CD8-positive, alpha-beta T cell (primary cell): ENCODE measurements at regions of chr9 and their contacts with region 1.

Region 1: DNA sequence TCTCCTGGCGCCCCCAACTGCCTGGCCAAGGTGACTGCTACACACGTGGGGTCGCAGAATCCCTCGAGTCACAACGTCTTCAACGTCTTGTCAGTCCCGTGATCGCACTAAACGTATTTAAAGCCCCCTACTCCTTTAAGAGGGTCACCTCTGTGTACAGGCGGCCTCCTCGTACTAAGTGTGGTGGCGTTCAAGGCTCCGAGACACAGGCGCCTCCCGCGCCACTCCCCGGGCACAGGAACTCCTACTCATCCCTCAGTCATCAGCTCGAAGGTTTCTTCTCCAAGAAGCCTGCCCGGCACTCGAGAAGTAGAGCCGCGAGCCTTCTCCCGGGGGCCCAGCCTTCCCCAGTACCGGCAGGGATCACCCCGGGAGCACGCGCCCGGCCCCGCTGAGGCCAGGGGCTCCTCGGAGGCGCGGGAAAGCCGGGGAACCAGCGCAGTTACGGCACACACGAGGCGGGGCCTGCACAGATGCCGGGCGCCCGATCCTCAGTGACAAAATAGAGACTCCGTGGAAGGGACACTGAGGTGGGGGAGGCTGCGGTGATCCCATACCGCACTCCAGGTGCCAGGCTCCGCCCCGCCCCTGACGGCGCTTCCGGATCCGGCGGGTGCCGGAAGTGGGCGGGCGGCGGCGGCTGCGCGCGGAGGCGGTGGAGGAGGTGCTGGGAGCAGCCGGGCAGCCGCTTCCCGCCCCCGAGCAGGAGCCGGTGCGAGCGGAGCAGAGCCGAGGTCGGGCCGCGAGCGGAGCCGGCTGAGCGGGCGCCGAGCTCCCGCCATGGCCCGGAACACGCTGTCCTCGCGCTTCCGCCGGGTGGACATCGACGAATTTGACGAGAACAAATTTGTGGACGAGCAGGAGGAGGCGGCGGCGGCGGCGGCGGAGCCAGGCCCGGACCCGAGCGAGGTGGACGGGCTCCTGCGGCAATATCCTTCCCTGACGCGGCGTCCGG is 6.9 kb downstream of the ARPC5L start:
- DNase-seq: peak; percentile 82 to 94 (median 88)
- ATAC-seq: peak; percentile 66
- H3K4me3 ChIP-seq: peak overlapping the region; percentile 76 to 79
- H3K4me3 Mint-ChIP-seq: peak overlapping the region; percentile 95
- H3K27ac ChIP-seq: peak overlapping the region; percentile 81 to 94
- H3K27ac Mint-ChIP-seq: peak overlapping the region; percentile 97
- H3K4me1 ChIP-seq: peaks cover 42% of the 10 kb centered on the region
- H3K4me1 Mint-ChIP-seq: peaks cover 51% of the 10 kb centered on the region
- H3K27me3 ChIP-seq: no peaks in the 10 kb centered on the region
- H3K27me3 Mint-ChIP-seq: no peaks in the 10 kb centered on the region
- CTCF ChIP-seq: no peak

Region 2: GRCh38 chr9:122975196-122975595 is 1893.6 kb before region 1 on chr9:
- CTCF ChIA-PET with region 1: no interaction called
- POLR2A ChIA-PET with region 1: no interaction called
- intact Hi-C with region 1: no loop called
- DNase-seq: no peak
- ATAC-seq: no peak
- H3K4me3 ChIP-seq: no peak overlapping the region
- H3K4me3 Mint-ChIP-seq: no peak overlapping the region
- H3K27ac ChIP-seq: no peak overlapping the region
- H3K27ac Mint-ChIP-seq: no peak overlapping the region
- H3K4me1 ChIP-seq: no peaks in the 10 kb centered on the region
- H3K4me1 Mint-ChIP-seq: peaks cover 3% of the 10 kb centered on the region
- H3K27me3 ChIP-seq: no peaks in the 10 kb centered on the region
- H3K27me3 Mint-ChIP-seq: no peaks in the 10 kb centered on the region
- CTCF ChIP-seq: no peak

Region 3: DNA sequence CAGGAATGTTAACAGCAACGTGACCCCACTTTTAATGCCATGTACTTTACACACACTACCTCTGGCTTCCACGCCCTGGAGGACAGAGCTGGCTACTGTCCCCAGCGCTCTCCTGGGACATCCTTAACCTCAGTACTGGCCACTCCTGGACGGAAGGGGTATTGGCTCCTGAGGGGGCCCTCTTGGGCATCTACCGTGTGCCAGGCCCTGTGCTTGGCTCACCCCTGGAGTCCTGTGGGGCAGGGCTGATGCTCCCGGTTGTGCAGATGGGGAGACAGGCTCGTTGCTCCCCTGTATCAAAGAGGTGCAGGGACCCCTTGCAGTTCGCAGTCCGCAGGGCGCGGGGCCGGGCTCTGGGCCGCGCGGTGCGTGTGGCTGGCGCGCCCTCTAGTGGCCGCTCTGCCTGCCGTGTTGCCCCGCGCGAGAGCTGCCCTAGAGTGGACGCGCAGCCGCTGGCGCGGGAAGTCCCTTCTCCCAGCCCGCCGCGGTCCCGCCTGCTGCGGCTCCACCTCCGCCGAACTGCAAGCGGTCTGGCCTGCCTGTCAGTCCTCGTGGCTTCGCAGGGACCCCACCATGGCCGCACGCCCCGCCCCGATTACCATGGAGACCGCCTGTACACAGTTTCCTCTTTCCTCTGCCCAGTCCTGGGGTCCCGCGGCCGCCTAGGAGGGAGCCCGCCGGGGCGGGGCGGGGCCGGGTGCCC is 15.8 kb before region 1 on chr9 and contains the start of gene WDR38:
- CTCF ChIA-PET with region 1: interaction called, 40 read pairs
- POLR2A ChIA-PET with region 1: interaction called, 3 read pairs
- intact Hi-C with region 1: loop called in 1 of 2 experiments (anchors 1 kb)
- DNase-seq: peak; percentile 64 to 95 (median 80)
- ATAC-seq: peak; percentile 83
- H3K4me3 ChIP-seq: peak within 1 kb of the TSS; percentile 37 to 44
- H3K4me3 Mint-ChIP-seq: peak within 1 kb of the TSS; percentile 65
- H3K27ac ChIP-seq: peak within 1 kb of the TSS in 1 of 2 experiments; percentile 73
- H3K27ac Mint-ChIP-seq: peak within 1 kb of the TSS; percentile 64
- H3K4me1 ChIP-seq: peaks cover 12% of the 10 kb centered on the region
- H3K4me1 Mint-ChIP-seq: peaks cover 9% of the 10 kb centered on the region
- H3K27me3 ChIP-seq: no peaks in the 10 kb centered on the region
- H3K27me3 Mint-ChIP-seq: peaks cover 9% of the 10 kb centered on the region
- CTCF ChIP-seq: peak; percentile 98
- total RNA-seq, gene WDR38: not detected

Region 4: GRCh38 chr9:124894741-124895170 is 26.0 kb after region 1 on chr9:
- CTCF ChIA-PET with region 1: interaction called, 7 read pairs
- POLR2A ChIA-PET with region 1: interaction called, 4 read pairs
- intact Hi-C with region 1: loop called in 1 of 2 experiments (anchors 2 kb)
- DNase-seq: peak in 8 of 9 experiments; percentile 21 to 83 (median 53)
- ATAC-seq: peak; percentile 97
- H3K4me3 ChIP-seq: no peak overlapping the region
- H3K4me3 Mint-ChIP-seq: no peak overlapping the region
- H3K27ac ChIP-seq: no peak overlapping the region
- H3K27ac Mint-ChIP-seq: peak overlapping the region; percentile 81
- H3K4me1 ChIP-seq: no peaks in the 10 kb centered on the region
- H3K4me1 Mint-ChIP-seq: peaks cover 13% of the 10 kb centered on the region
- H3K27me3 ChIP-seq: peaks cover 0 to 7% of the 10 kb centered on the region in 2 experiments
- H3K27me3 Mint-ChIP-seq: peaks cover 13% of the 10 kb centered on the region
- CTCF ChIP-seq: peak; percentile 63

Region 5: GRCh38 chr9:125200210-125201047 is 331.6 kb after region 1 on chr9 and contains the start of gene RABEPK:
- CTCF ChIA-PET with region 1: no interaction called
- POLR2A ChIA-PET with region 1: interaction called, 4 read pairs
- intact Hi-C with region 1: loop called in 1 of 2 experiments (anchors 5 kb)
- DNase-seq: peak; percentile 74 to 94 (median 89)
- ATAC-seq: peak; percentile 97
- H3K4me3 ChIP-seq: peak within 1 kb of the TSS; percentile 77 to 100
- H3K4me3 Mint-ChIP-seq: peak within 1 kb of the TSS; percentile 91
- H3K27ac ChIP-seq: peak within 1 kb of the TSS; percentile 85 to 88
- H3K27ac Mint-ChIP-seq: peak within 1 kb of the TSS; percentile 90
- H3K4me1 ChIP-seq: peaks cover 41% of the 10 kb centered on the region
- H3K4me1 Mint-ChIP-seq: peaks cover 51% of the 10 kb centered on the region
- H3K27me3 ChIP-seq: no peaks in the 10 kb centered on the region
- H3K27me3 Mint-ChIP-seq: no peaks in the 10 kb centered on the region
- CTCF ChIP-seq: no peak
- total RNA-seq, gene RABEPK: 6.2 to 6.9 TPM